ENCODE measurements at regions of chr3 and their contacts with region 1.

Region 1: DNA sequence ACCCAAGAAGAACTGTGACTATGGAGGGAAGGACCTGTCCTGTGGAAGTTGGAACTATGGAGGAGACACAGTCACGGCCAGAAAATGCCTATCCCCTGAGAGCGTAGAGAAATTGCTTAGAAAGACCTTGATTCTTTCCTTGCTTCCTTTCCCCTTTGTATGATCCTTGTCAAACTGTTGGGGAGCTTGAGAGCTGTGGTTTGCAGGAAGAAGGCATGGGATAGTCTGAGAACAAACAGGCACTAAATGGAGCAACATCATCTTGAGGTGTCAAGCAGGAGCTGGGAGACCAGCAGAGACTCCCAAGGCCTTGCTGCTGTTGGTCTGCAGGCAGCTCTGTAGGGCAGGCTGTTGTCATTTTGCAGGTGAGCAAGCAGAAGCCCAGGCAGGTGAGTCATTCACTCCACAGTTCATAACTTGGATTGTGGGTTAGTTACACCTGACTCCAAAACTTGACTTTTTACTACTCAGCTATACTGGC is 298.9 kb downstream of the LRTM1 start:
- DNase-seq: peak in 1 of 2 experiments; percentile 56
- H3K4me3 ChIP-seq: no peak overlapping the region
- H3K27ac ChIP-seq: no peak overlapping the region
- H3K4me1 ChIP-seq: peaks cover 2 to 9% (median 6%) of the 10 kb centered on the region in 4 experiments; a peak in 4 of 7 replicates
- H3K27me3 ChIP-seq: no peaks in the 10 kb centered on the region; a peak in 2 of 7 replicates
- CTCF ChIP-seq: no peak
- EP300 ChIP-seq: no peak
- POLR2A ChIP-seq: peak in 1 of 2 experiments; percentile 78; a peak in 1 of 3 replicates
- RAD21 ChIP-seq: no peak

Region 2: DNA sequence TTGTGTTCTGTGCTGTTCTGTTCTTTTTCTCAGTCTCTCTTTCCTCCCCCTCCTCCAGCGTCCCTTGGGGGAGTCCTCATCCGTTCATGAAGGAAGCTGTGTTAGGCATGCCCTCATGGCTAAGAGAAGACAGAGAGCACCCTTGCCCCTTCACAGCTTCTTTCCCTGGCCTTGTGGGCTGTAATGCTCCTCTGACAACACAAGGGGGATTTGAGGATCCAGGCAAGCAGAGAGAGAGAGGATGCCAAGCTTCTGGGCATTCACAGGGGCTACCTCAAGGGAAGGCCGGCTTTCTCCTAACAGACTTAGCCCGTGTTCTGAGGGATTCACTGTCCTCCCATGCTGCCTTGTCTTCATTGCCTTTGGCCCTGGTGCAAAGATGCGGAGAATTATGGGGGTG is 90.6 kb before region 1 on chr3:
- CTCF ChIA-PET with region 1: interaction called, 14 read pairs
- POLR2A ChIA-PET with region 1: interaction called, 49 read pairs
- DNase-seq: peak; percentile 19 to 54
- H3K4me3 ChIP-seq: no peak overlapping the region
- H3K27ac ChIP-seq: no peak overlapping the region
- H3K4me1 ChIP-seq: peaks cover 0 to 1% (median 0%) of the 10 kb centered on the region in 4 experiments; a peak in 1 of 7 replicates
- H3K27me3 ChIP-seq: no peaks in the 10 kb centered on the region
- CTCF ChIP-seq: peak; percentile 54 to 80 (median 67)
- EP300 ChIP-seq: no peak
- POLR2A ChIP-seq: no peak
- RAD21 ChIP-seq: peak; percentile 64 to 84

Region 3: GRCh38 chr3:54578417-54578816 is 50.5 kb before region 1 on chr3:
- CTCF ChIA-PET with region 1: no interaction called
- POLR2A ChIA-PET with region 1: no interaction called
- DNase-seq: no peak
- H3K4me3 ChIP-seq: no peak overlapping the region
- H3K27ac ChIP-seq: no peak overlapping the region
- H3K4me1 ChIP-seq: peaks cover 0 to 3% (median 0%) of the 10 kb centered on the region in 4 experiments; a peak in 2 of 7 replicates
- H3K27me3 ChIP-seq: no peaks in the 10 kb centered on the region
- CTCF ChIP-seq: no peak
- EP300 ChIP-seq: no peak
- POLR2A ChIP-seq: no peak
- RAD21 ChIP-seq: no peak

Region 4: DNA sequence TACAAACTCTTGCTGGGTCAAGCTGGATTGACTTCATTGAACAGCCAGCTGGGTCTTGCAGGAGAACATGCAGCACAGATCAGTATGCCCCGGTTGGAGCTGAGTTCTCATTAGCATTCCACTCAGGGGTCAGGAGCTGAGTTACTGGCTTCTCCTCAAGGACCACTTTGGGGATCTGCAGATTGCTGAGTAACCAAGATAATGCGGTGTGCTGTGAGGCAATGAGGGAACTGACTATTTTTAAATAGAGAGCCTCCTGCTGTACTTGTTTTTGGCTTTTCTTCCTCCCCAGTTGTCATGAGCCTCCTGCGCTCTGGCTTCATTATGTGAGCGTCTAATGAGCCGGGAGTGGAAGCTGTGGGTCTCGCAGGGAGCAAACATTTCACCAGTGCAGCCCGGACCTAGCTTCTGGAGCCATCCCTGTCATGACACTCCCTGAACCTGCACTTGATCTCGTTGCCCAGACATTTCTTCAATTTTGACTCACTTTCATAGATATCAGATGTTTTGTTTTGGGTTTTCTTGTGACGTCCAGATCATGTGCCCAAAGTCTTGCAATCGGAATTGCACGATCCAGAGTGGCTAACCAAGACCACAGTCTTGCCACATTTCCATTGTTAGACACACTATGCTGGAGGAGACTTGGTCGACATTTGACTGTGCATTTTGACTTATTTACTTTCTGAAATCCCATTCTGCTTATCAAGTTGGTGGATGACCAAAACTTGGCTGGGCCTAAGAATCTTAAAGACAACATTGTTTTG is 28.3 kb before region 1 on chr3:
- CTCF ChIA-PET with region 1: no interaction called
- POLR2A ChIA-PET with region 1: interaction called, 17 read pairs
- DNase-seq: peak in 1 of 2 experiments; percentile 39
- H3K4me3 ChIP-seq: no peak overlapping the region
- H3K27ac ChIP-seq: no peak overlapping the region
- H3K4me1 ChIP-seq: peaks cover 2 to 15% (median 6%) of the 10 kb centered on the region in 4 experiments; a peak in 6 of 7 replicates
- H3K27me3 ChIP-seq: 0 out of 7 replicates have a peak, but pooled peaks cover 0 to 3% (median 0%) of the 10 kb centered on the region in 4 experiments
- CTCF ChIP-seq: no peak
- EP300 ChIP-seq: no peak
- POLR2A ChIP-seq: no peak
- RAD21 ChIP-seq: no peak

Region 5: DNA sequence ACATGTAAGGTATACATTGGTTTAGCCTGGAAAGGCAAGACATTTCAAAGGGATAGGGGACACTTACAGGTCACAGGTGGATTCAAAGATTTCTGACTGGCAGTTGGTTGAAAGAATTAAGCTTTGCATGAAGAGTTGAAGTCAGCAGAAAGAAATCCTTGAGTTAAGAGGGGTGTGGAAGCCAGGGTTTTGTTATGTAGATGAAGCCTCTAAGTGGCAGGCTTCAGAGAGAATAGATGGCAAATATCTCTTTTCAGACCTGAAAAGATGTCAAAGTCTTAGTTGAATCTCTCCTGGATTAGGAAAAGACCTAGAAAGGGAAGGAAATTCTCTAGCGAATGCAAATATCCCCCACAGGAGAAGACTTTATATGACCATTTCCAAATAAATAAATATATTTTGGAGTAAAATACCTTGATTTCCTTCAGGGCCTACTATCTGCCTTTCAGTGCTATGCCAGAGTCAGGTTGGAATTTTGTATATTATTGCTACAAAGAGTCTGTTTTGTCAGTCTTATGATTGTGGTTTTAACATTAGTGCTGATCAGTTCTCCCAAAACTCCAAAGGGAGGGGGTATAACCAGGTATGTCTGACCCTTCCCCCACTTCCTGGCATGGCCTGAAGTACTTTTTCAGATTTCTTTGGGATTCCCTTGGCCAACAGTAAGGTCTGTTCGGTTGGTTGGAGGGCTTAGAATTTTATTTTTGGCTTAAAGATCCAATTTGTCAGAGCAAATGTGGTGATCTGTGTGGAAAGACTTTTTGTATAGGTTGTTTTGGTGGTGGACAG is 12.5 kb after region 1 on chr3:
- CTCF ChIA-PET with region 1: no interaction called
- POLR2A ChIA-PET with region 1: interaction called, 87 read pairs
- DNase-seq: no peak
- H3K4me3 ChIP-seq: peak overlapping the region; percentile 3 to 45 (median 16); a peak in 4 of 8 replicates
- H3K27ac ChIP-seq: peak overlapping the region; percentile 65; the same call in 1 of the 2 replicates
- H3K4me1 ChIP-seq: peaks cover 9 to 26% (median 23%) of the 10 kb centered on the region in 4 experiments
- H3K27me3 ChIP-seq: no peaks in the 10 kb centered on the region
- CTCF ChIP-seq: no peak
- EP300 ChIP-seq: no peak
- POLR2A ChIP-seq: no peak
- RAD21 ChIP-seq: no peak

Region 6: GRCh38 chr3:54660714-54661132 is 31.8 kb after region 1 on chr3:
- CTCF ChIA-PET with region 1: no interaction called
- POLR2A ChIA-PET with region 1: interaction called, 10 read pairs
- DNase-seq: no peak
- H3K4me3 ChIP-seq: no peak overlapping the region
- H3K27ac ChIP-seq: no peak overlapping the region
- H3K4me1 ChIP-seq: peaks cover 0 to 6% (median 1%) of the 10 kb centered on the region in 4 experiments; a peak in 3 of 7 replicates
- H3K27me3 ChIP-seq: no peaks in the 10 kb centered on the region
- CTCF ChIP-seq: no peak
- EP300 ChIP-seq: no peak
- POLR2A ChIP-seq: no peak
- RAD21 ChIP-seq: no peak

Region 7: DNA sequence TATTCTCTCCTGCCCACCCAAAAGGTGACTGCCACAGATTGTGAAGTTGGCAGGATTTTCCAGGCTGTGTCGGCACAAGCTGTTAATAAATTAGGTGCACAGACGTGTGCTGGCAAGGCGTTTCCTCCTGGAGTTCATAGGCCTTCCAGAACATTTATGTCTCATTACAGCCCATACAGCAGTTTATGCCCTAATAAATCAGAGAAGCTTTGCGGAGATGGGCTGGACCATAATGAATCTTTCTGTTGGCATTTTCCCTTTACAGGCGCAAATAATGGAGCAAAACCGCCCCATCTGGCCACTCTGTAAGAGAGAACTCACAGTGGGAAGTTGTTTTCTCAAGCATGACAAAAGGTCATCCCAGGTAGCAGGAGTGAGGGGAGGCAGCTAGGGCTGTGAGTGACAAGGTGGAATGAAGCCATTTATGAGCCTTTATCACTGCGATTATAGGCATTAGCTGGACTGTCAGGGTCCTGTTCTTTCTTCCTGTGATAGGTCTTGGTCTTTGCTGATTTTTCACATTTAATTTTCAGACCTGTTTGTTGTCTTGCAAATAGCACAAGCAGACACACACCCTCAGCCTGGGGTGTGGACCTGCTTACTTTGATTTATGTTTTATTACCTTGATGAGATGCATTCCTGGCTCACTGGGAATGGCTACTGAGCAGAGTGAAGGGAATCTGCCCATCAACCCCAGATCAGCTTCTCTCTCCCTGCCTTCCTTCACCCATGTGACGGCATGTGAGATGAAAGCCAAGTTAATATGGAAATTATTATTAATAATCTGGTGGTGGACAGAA is 41.5 kb after region 1 on chr3:
- CTCF ChIA-PET with region 1: no interaction called
- POLR2A ChIA-PET with region 1: interaction called, 19 read pairs
- DNase-seq: peak in 1 of 2 experiments; percentile 54
- H3K4me3 ChIP-seq: peak overlapping the region in 1 of 4 experiments; percentile 16; a peak in 1 of 8 replicates
- H3K27ac ChIP-seq: no peak overlapping the region
- H3K4me1 ChIP-seq: peaks cover 3 to 23% (median 13%) of the 10 kb centered on the region in 4 experiments; a peak in 6 of 7 replicates
- H3K27me3 ChIP-seq: no peaks in the 10 kb centered on the region
- CTCF ChIP-seq: peak in 1 of 3 experiments; percentile 31; a peak in 1 of 4 replicates
- EP300 ChIP-seq: no peak
- POLR2A ChIP-seq: no peak
- RAD21 ChIP-seq: peak; percentile 27 to 32; a peak in 3 of 4 replicates

Measured in H1 (cell line).